Thyroid gland (tissue), 4 donors: ENCODE measurements at regions of chr6 and their contacts with region 1.

Region 1: GRCh38 chr6:43667245-43668150 is 20.1 kb downstream of the MRPS18A start:
- DNase-seq: peak; percentile 82 to 90
- H3K4me3 ChIP-seq: no peak overlapping the region
- H3K27ac ChIP-seq: peak overlapping the region; percentile 58 to 76 (median 74)
- H3K4me1 ChIP-seq: peaks cover 25 to 34% of the 10 kb centered on the region in 2 donors
- H3K27me3 ChIP-seq: no peaks in the 10 kb centered on the region
- CTCF ChIP-seq: peak; percentile 89 to 97 (median 94)
- POLR2A ChIP-seq: no peak

Region 2: DNA sequence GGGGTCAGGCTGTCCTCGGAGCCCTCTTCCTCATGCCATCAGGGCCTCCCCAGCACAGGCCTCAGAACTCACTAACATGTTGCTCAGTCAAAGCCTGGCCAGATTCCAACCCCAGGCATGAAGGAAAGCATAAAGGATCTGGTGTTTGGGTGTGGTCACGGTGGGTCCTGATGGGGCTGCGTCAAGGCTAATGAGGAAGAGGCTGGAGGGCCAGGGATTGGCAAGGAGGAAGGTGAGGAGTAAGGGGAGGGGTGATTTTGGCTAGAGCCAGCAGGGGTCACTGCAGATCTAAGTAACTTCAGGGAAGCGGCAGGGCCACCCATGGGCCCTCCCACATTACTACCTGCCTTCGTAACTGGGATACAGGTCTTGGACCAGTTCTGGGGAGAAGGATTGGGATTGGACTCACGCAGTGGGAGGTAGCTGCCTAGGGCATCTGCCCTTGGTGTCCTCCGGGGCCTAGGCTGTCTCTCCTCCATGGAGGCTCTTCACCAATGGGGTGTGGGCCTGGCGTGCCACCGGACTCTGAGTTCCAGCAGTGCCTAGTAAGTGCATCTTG is 56.3 kb after region 1 on chr6:
- intact Hi-C with region 1: loop called (anchors 10 kb)
- DNase-seq: peak; percentile 81 to 83
- H3K4me3 ChIP-seq: no peak overlapping the region
- H3K27ac ChIP-seq: no peak overlapping the region
- H3K4me1 ChIP-seq: peaks cover 0 to 9% of the 10 kb centered on the region in 2 donors
- H3K27me3 ChIP-seq: no peaks in the 10 kb centered on the region
- CTCF ChIP-seq: peak in 5 of 6 experiments; percentile 37 to 80 (median 66)
- POLR2A ChIP-seq: no peak

Region 3: GRCh38 chr6:43769526-43770416 is 102.3 kb after region 1 on chr6 and contains the start of gene VEGFA:
- intact Hi-C with region 1: loop called (anchors 5 kb)
- DNase-seq: peak; percentile 88 to 91
- H3K4me3 ChIP-seq: peak within 1 kb of the TSS; percentile 74 to 100 (median 83)
- H3K27ac ChIP-seq: peak within 1 kb of the TSS; percentile 93 to 98 (median 93)
- H3K4me1 ChIP-seq: peaks cover 5 to 9% of the 10 kb centered on the region in 2 donors
- H3K27me3 ChIP-seq: no peaks in the 10 kb centered on the region
- CTCF ChIP-seq: peak; percentile 87 to 99 (median 98)
- POLR2A ChIP-seq: peak; percentile 92 to 96
- total RNA-seq, gene VEGFA: 510 to 1,437 (median 630) TPM

Region 4: GRCh38 chr6:43817192-43817591 is 149.7 kb after region 1 on chr6:
- intact Hi-C with region 1: no loop called
- DNase-seq: no peak
- H3K4me3 ChIP-seq: no peak overlapping the region
- H3K27ac ChIP-seq: no peak overlapping the region
- H3K4me1 ChIP-seq: peaks cover 13 to 40% of the 10 kb centered on the region in 2 donors
- H3K27me3 ChIP-seq: no peaks in the 10 kb centered on the region
- CTCF ChIP-seq: peak in 1 of 6 experiments; percentile 17
- POLR2A ChIP-seq: no peak

Region 5: DNA sequence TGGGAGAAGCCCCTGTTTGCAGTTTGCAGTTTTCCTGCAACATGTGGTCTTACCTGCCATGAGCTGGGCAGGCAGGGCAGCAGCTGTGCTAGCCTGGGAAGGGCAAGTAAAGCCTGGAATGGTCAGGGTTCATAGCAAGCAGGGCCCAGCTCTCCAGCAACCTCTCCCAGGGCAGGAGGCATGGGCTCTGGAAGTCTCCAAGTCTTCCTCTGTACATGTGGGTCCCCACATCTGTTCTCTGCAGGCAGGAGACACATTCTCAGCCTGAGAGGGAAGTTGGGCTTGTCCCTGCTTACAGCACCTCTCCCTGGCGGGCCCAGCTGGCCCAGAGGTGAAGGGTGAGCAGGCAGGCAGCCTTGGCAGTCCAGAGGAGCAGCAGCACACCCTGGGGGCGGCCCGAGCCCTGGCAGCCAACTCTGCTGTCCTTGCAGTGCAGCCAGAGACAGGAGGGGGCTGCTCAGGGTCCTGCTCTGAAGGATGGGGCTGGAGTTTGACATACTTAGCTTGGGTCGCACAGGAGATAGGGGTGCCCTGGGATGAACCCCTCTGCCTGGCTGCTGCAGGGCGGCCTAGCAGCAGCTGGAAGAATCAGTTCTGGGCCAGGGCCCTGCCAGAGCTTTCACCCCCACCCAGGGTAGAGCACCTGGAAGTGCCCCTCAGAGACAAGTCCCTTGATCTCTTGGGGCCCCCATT is 283.7 kb after region 1 on chr6:
- intact Hi-C with region 1: loop called (anchors 10 kb)
- DNase-seq: peak; percentile 92
- H3K4me3 ChIP-seq: no peak overlapping the region
- H3K27ac ChIP-seq: peak overlapping the region in 2 of 3 donors; percentile 43 to 45
- H3K4me1 ChIP-seq: peaks cover 5 to 32% of the 10 kb centered on the region in 2 donors
- H3K27me3 ChIP-seq: no peaks in the 10 kb centered on the region
- CTCF ChIP-seq: peak; percentile 48 to 98 (median 86)
- POLR2A ChIP-seq: no peak

Region 6: GRCh38 chr6:44074439-44075136 is 407.1 kb after region 1 on chr6:
- intact Hi-C with region 1: loop called (anchors 2 kb)
- DNase-seq: peak; percentile 70 to 74
- H3K4me3 ChIP-seq: no peak overlapping the region
- H3K27ac ChIP-seq: peak overlapping the region; percentile 1 to 29 (median 22)
- H3K4me1 ChIP-seq: peaks cover 11 to 42% of the 10 kb centered on the region in 2 donors
- H3K27me3 ChIP-seq: no peaks in the 10 kb centered on the region
- CTCF ChIP-seq: peak; percentile 74 to 98 (median 86)
- POLR2A ChIP-seq: no peak

Region 7: DNA sequence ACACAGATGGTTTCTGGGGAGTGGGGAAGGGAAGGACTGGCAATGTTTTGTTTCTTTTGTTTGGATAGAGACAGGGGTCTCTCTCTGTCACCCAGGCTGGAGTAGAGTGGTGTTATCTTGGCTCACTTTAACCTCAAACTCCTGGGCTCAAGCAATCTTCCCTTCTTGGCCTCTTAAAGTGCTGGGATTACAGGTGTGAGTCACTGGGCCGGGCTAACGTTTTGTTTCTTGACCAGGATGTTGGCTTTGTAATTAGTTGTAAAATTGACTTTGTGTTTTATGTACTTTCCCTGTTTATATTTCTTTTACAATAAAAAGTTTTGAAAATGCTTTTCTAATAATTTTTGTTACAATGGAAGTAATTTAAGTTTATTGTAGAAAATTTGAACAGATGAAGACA is 685.8 kb after region 1 on chr6:
- intact Hi-C with region 1: no loop called
- DNase-seq: no peak
- H3K4me3 ChIP-seq: no peak overlapping the region
- H3K27ac ChIP-seq: no peak overlapping the region
- H3K4me1 ChIP-seq: no peaks in the 10 kb centered on the region
- H3K27me3 ChIP-seq: no peaks in the 10 kb centered on the region
- CTCF ChIP-seq: no peak
- POLR2A ChIP-seq: no peak